ENCODE measurements at regions of chr19 and their contacts with region 1.

Region 1: GRCh38 chr19:58386576-58387337 is at the start of gene RPS5:
- DNase-seq: peak; percentile 98
- H3K4me3 Mint-ChIP-seq: peak within 1 kb of the TSS; percentile 97
- H3K27ac Mint-ChIP-seq: peak within 1 kb of the TSS; percentile 97
- H3K4me1 Mint-ChIP-seq: peaks cover 35% of the 10 kb centered on the region
- H3K27me3 Mint-ChIP-seq: no peaks in the 10 kb centered on the region
- total RNA-seq, gene RPS5: 1,286 and 1,288 TPM in 2 replicates

Region 2: GRCh38 chr19:58278157-58279041 is 108.4 kb before region 1 on chr19 and contains the start of gene ZNF8:
- intact Hi-C with region 1: loop called (anchors 1 kb)
- DNase-seq: peak; percentile 99
- H3K4me3 Mint-ChIP-seq: peak within 1 kb of the TSS; percentile 99
- H3K27ac Mint-ChIP-seq: peak within 1 kb of the TSS; percentile 97
- H3K4me1 Mint-ChIP-seq: peaks cover 26% of the 10 kb centered on the region
- H3K27me3 Mint-ChIP-seq: no peaks in the 10 kb centered on the region
- total RNA-seq, gene ZNF8: 4.8 and 5.1 TPM in 2 replicates

Region 3: DNA sequence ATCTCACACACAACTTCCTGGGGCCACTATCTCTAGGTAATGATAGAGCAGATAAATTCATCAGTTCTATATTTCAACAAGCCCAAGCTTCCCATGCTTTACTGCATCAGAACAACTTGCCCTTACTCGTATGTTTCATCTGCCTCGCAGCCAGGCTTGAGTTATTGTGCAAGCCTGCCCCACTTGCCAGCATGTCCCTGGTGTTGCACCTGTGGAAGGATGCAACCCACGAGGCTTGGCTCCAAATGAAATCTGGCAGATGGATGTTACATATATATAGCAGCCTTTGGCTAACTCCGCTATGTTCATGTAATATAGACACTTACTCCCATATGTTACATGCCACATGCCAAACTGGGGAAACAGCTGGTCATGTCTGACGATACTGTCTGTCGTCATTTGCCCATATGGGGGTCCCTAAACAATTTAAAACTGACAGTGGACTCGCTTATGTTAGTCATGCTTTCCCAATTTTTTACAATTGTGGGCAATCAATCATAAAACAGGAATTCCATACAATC is 75.4 kb before region 1 on chr19:
- intact Hi-C with region 1: no loop called
- DNase-seq: no peak
- H3K4me3 Mint-ChIP-seq: no peak overlapping the region
- H3K27ac Mint-ChIP-seq: no peak overlapping the region
- H3K4me1 Mint-ChIP-seq: peaks cover 20% of the 10 kb centered on the region
- H3K27me3 Mint-ChIP-seq: no peaks in the 10 kb centered on the region

Region 4: GRCh38 chr19:58362272-58362994 is 24.3 kb before region 1 on chr19 and contains the start of gene ZNF497:
- intact Hi-C with region 1: loop called (anchors 1 kb)
- DNase-seq: peak; percentile 99
- H3K4me3 Mint-ChIP-seq: peak within 1 kb of the TSS; percentile 95
- H3K27ac Mint-ChIP-seq: peak within 1 kb of the TSS; percentile 97
- H3K4me1 Mint-ChIP-seq: peaks cover 9% of the 10 kb centered on the region
- H3K27me3 Mint-ChIP-seq: no peaks in the 10 kb centered on the region
- total RNA-seq, gene ZNF497: 0.79 and 1.1 TPM in 2 replicates

Region 5: DNA sequence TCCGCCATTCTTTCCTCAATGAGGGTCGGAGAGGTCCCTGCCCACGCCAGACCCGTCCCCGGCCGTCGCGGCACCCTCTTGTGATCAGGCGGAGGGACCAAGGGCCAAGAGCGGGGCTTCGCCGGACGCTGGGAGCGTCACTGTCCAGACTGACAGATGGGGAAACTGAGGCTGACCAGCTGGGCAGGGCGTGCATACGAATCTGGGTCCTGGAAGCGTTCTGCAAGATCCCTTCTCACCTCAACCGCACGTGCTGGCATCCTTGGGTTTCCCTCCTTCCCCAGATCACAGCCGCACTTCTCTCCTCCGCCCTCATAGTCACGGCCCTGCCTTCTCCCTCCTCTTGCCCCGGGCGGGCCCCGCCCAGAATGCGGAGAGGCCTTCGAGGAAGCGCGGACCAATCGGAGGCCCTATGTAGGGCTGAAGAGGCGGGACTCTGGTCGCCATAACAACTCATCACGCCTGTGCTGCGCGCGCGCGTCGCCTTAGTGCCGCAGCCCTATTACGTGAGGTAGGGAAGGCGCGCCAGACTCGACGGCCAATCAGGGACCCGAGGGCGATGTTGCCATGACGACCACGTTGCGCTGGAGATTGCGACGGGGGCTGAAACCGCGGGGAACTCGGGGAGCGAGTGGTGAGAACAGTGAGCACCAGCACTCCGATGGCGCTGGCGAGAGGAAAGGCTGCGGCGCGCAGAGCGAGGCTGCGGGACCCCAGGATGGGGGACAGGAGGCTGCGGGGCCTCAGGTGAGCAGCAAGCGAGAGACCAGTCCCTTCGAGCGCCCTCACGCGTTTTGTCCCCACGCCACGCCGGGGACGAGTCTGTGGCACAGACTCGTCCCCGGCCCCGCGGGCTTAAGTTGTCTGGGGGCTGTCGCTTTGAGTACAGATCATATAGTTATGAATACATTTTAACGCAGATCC is 14.4 kb after region 1 on chr19:
- intact Hi-C with region 1: loop called (anchors 1 kb)
- DNase-seq: peak; percentile 100
- H3K4me3 Mint-ChIP-seq: peak overlapping the region; percentile 91
- H3K27ac Mint-ChIP-seq: peak overlapping the region; percentile 90
- H3K4me1 Mint-ChIP-seq: peaks cover 10% of the 10 kb centered on the region
- H3K27me3 Mint-ChIP-seq: peaks cover 7% of the 10 kb centered on the region

Region 6: DNA sequence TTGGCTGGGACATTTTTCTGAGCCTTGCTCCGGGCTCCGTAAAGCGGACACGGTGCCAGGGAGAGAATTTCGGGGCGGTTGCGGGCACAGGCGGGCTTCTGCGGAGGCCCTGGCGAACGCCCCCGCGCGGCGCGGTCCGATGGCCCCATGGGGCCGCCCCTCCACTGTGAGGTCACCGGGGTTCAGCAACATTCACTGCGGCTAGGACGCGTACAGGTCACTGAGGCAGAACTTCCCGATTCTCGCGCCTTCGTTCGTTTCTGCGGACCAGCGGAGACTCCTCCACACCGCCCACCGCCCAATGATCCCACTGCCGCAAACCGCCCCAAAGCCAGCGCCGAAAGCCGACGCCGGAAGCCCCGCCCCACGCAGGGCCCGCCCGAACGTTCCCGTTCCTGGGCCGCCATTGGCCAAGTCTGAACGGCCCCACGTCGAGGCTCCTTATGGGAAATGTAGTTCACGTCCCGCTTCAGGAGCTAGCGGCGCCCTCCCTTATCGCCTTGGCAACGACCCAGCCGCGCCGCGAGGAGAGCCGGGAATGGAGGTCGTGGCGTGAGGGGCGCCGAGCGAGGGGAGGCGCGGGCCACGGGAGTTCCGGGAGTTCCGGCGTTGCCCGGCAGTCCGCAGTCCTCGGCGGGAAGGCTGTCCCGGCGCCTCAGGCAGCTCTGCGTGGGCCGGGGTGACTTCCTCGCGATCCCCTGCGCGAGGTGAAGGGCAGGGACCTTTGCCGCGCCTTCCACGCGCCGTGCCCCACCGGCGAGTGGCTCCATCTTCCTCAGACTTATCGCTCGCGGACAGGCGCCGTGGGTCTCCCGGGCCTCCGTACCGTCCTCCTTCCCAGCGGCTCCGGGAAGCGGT is 21.6 kb after region 1 on chr19 and contains the start of gene ZNF584:
- intact Hi-C with region 1: loop called (anchors 1 kb)
- DNase-seq: peak; percentile 98
- H3K4me3 Mint-ChIP-seq: peak within 1 kb of the TSS; percentile 88
- H3K27ac Mint-ChIP-seq: peak within 1 kb of the TSS; percentile 92
- H3K4me1 Mint-ChIP-seq: peaks cover 32% of the 10 kb centered on the region
- H3K27me3 Mint-ChIP-seq: no peaks in the 10 kb centered on the region
- total RNA-seq, gene ZNF584: 17.4 and 17.7 TPM in 2 replicates

Region 7: GRCh38 chr19:58439576-58440554 is 53.1 kb after region 1 on chr19 and contains the start of gene ZNF132:
- intact Hi-C with region 1: loop called (anchors 1 kb)
- DNase-seq: peak; percentile 98
- H3K4me3 Mint-ChIP-seq: peak within 1 kb of the TSS; percentile 97
- H3K27ac Mint-ChIP-seq: peak within 1 kb of the TSS; percentile 97
- H3K4me1 Mint-ChIP-seq: peaks cover 21% of the 10 kb centered on the region
- H3K27me3 Mint-ChIP-seq: no peaks in the 10 kb centered on the region
- total RNA-seq, gene ZNF132: 3.6 and 3.8 TPM in 2 replicates

Measured in activated CD4-positive, alpha-beta T cell treated with anti-CD3 and anti-CD28 coated beads, Interleukin-2, amount 10 ng/mL, durations not matched to agents 24 days and 14 days (primary cell).